Activated T-helper 1 cell treated with anti-CD3 and anti-CD28 coated beads, Interleukin-12 subunit alpha, Interleukin-12 subunit beta, Interleukin-2, Interleukin-4 antibody, amounts not matched to agents 30 ng/mL and 10 ng/mL and 1 ng/mL, durations not matched to agents 14 hours and 24 hours and 36 hours (primary cell): ENCODE measurements at regions of chr20 and their contacts with region 1.

Region 1: GRCh38 chr20:17504898-17505635 is 26.1 kb downstream of the BFSP1 start:
- DNase-seq: peak; percentile 71
- H3K4me3 Mint-ChIP-seq: peak overlapping the region; percentile 81
- H3K27ac Mint-ChIP-seq: peak overlapping the region; percentile 86
- H3K4me1 Mint-ChIP-seq: peaks cover 71% of the 10 kb centered on the region
- H3K27me3 Mint-ChIP-seq: peaks cover 4% of the 10 kb centered on the region

Region 2: GRCh38 chr20:17530716-17531664 is 25.9 kb after region 1 on chr20 and contains the start of gene BFSP1:
- intact Hi-C with region 1: loop called (anchors 1 kb)
- DNase-seq: peak; percentile 44
- H3K4me3 Mint-ChIP-seq: peak within 1 kb of the TSS; percentile 88
- H3K27ac Mint-ChIP-seq: peak within 1 kb of the TSS; percentile 95
- H3K4me1 Mint-ChIP-seq: peaks cover 30% of the 10 kb centered on the region
- H3K27me3 Mint-ChIP-seq: peaks cover 12% of the 10 kb centered on the region
- total RNA-seq, gene BFSP1: 0.76 and 0.80 TPM in 2 replicates

Region 3: GRCh38 chr20:17558154-17558940 is 53.3 kb after region 1 on chr20:
- intact Hi-C with region 1: loop called (anchors 1 kb)
- DNase-seq: no peak
- H3K4me3 Mint-ChIP-seq: peak overlapping the region; percentile 71
- H3K27ac Mint-ChIP-seq: peak overlapping the region; percentile 95
- H3K4me1 Mint-ChIP-seq: peaks cover 43% of the 10 kb centered on the region
- H3K27me3 Mint-ChIP-seq: no peaks in the 10 kb centered on the region

Region 4: DNA sequence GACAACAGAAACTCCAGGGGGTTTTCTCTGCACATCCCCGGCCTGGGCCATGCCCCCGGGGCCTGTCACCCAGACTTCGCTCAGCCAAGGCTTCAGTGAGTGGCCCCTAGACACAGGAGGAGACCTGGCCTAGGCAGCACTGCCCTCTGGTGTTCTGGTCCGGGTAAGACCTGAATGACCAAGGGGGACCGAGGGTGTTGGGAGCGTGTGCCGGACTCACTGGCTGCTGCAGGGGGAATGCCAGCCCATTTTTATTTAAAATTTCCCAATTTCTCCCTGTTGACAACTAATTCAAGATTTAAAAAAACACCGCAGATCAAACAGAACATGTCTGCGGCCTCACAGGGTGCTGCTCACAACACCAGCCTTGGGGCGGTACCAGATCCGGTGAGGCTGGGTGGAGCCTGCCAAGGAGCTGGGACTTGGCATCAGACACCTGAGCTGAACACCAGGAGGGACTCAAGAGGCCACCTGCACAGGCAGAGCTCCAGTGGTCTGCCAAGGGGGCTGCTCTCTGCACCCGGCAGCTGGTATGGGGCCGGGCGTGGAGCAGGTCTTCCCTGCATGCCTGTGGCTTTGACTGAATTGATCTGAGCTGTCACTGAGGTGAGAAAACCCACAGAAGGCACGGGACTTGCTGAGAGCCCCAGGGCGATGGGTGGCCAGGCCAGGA is 112.6 kb after region 1 on chr20:
- intact Hi-C with region 1: loop called (anchors 1 kb)
- DNase-seq: no peak
- H3K4me3 Mint-ChIP-seq: no peak overlapping the region
- H3K27ac Mint-ChIP-seq: no peak overlapping the region
- H3K4me1 Mint-ChIP-seq: peaks cover under 1% of the 10 kb centered on the region
- H3K27me3 Mint-ChIP-seq: no peaks in the 10 kb centered on the region

Region 5: GRCh38 chr20:17898548-17898994 is 393.5 kb after region 1 on chr20:
- intact Hi-C with region 1: loop called (anchors 1 kb)
- DNase-seq: peak; percentile 44
- H3K4me3 Mint-ChIP-seq: no peak overlapping the region
- H3K27ac Mint-ChIP-seq: no peak overlapping the region
- H3K4me1 Mint-ChIP-seq: peaks cover 37% of the 10 kb centered on the region
- H3K27me3 Mint-ChIP-seq: peaks cover 17% of the 10 kb centered on the region

Region 6: DNA sequence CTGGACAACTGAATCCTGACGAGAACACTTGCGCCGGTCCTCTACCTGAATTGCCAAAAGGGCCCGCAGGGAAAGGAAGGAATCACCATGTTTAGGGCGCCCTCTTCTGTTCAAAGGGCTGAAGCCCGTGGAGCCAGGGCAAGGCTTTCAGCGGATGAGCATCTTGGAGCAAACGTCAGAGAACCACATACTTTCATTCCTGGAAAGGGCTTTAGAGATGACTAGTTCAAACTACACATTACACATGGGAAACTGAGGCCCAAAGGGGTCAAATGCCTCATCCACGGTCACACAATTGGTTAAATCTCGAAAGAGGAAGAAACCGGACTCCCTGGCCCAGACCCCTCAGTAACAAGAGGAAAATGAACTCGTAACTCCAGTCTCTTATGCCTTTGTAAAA is 771.8 kb after region 1 on chr20:
- intact Hi-C with region 1: loop called (anchors 1 kb)
- DNase-seq: peak; percentile 61
- H3K4me3 Mint-ChIP-seq: no peak overlapping the region
- H3K27ac Mint-ChIP-seq: no peak overlapping the region
- H3K4me1 Mint-ChIP-seq: peaks cover 10% of the 10 kb centered on the region
- H3K27me3 Mint-ChIP-seq: peaks cover 19% of the 10 kb centered on the region

Region 7: GRCh38 chr20:18587665-18588573 is 1082.9 kb after region 1 on chr20 and contains the start of gene DTD1:
- intact Hi-C with region 1: loop called (anchors 10 kb)
- DNase-seq: peak; percentile 80
- H3K4me3 Mint-ChIP-seq: peak within 1 kb of the TSS; percentile 93
- H3K27ac Mint-ChIP-seq: peak within 1 kb of the TSS; percentile 82
- H3K4me1 Mint-ChIP-seq: peaks cover 25% of the 10 kb centered on the region
- H3K27me3 Mint-ChIP-seq: peaks cover 10% of the 10 kb centered on the region
- total RNA-seq, gene DTD1: 37.7 and 44.0 TPM in 2 replicates